Activated B cell treated with CpG ODN at 0.5 μM for 24 hours (primary cell): ENCODE measurements at regions of chr6 and their contacts with region 1.

Region 1: GRCh38 chr6:32244946-32245398 is 21.1 kb upstream of the NOTCH4 start:
- DNase-seq: peak; percentile 77
- ATAC-seq: peak; percentile 91
- H3K4me3 Mint-ChIP-seq: peak overlapping the region; percentile 81
- H3K27ac Mint-ChIP-seq: peak overlapping the region; percentile 50
- H3K4me1 Mint-ChIP-seq: peaks cover 16% of the 10 kb centered on the region
- H3K27me3 Mint-ChIP-seq: no peaks in the 10 kb centered on the region
- CTCF ChIP-seq: no peak

Region 2: GRCh38 chr6:32118782-32119628 is 126.0 kb before region 1 on chr6:
- CTCF ChIA-PET with region 1: interaction called, 5 read pairs
- POLR2A ChIA-PET with region 1: interaction called, 7 read pairs
- intact Hi-C with region 1: loop called (anchors 1 kb)
- DNase-seq: peak; percentile 57
- ATAC-seq: peak; percentile 94
- H3K4me3 Mint-ChIP-seq: no peak overlapping the region
- H3K27ac Mint-ChIP-seq: peak overlapping the region; percentile 56
- H3K4me1 Mint-ChIP-seq: peaks cover 8% of the 10 kb centered on the region
- H3K27me3 Mint-ChIP-seq: no peaks in the 10 kb centered on the region
- CTCF ChIP-seq: peak; percentile 57

Region 3: DNA sequence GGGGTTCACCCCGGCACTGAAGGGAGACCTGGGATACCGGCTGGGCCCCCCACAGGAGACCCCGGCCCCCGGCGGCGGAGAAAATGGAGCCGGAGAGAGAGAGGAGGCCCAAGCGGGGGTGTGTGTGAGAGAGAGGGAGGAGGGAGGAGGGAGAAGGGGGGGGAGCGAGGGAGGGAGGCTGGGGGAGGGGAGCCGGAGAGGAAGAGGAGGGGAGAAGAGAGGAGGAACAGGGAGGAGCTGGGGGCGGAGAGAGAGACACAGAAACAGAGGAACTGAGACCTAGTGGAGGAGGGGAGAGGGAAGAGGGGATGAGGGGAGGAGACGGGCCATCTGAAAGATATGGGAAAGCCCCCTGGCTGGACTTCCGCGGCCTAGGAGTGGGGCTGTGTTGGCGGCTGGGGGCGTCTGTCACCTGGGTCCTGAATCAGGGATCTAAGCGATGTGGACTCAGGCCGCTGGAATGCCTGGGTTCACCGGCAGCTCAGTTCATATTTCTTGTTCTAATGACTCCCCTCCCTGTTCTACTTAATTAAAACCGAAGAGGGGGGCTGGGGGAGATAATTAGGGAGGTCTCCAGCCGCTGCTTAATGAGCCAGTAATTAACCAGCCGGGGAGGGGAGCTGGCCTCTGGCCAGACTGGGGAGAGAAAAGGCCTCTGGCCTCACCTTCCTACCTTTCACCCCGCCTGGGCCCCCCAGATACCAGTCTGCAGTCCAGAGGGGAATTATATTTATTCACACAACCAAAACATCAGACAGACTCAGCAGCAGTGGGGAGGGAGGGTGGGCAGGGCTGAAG is 54.7 kb before region 1 on chr6 and contains the start of gene PBX2:
- CTCF ChIA-PET with region 1: interaction called, 6 read pairs
- POLR2A ChIA-PET with region 1: interaction called, 11 read pairs
- intact Hi-C with region 1: no loop called
- DNase-seq: peak; percentile 61
- ATAC-seq: peak; percentile 86
- H3K4me3 Mint-ChIP-seq: peak within 1 kb of the TSS; percentile 91
- H3K27ac Mint-ChIP-seq: peak within 1 kb of the TSS; percentile 96
- H3K4me1 Mint-ChIP-seq: peaks cover 85% of the 10 kb centered on the region
- H3K27me3 Mint-ChIP-seq: no peaks in the 10 kb centered on the region
- CTCF ChIP-seq: no peak
- total RNA-seq, gene PBX2: 134 and 153 TPM in 2 replicates

Region 4: GRCh38 chr6:32402812-32403211 is 157.8 kb after region 1 on chr6:
- CTCF ChIA-PET with region 1: interaction called, 10 read pairs
- POLR2A ChIA-PET with region 1: no interaction called
- intact Hi-C with region 1: no loop called
- DNase-seq: no peak
- ATAC-seq: no peak
- H3K4me3 Mint-ChIP-seq: no peak overlapping the region
- H3K27ac Mint-ChIP-seq: no peak overlapping the region
- H3K4me1 Mint-ChIP-seq: peaks cover 9% of the 10 kb centered on the region
- H3K27me3 Mint-ChIP-seq: peaks cover 2% of the 10 kb centered on the region
- CTCF ChIP-seq: no peak

Region 5: DNA sequence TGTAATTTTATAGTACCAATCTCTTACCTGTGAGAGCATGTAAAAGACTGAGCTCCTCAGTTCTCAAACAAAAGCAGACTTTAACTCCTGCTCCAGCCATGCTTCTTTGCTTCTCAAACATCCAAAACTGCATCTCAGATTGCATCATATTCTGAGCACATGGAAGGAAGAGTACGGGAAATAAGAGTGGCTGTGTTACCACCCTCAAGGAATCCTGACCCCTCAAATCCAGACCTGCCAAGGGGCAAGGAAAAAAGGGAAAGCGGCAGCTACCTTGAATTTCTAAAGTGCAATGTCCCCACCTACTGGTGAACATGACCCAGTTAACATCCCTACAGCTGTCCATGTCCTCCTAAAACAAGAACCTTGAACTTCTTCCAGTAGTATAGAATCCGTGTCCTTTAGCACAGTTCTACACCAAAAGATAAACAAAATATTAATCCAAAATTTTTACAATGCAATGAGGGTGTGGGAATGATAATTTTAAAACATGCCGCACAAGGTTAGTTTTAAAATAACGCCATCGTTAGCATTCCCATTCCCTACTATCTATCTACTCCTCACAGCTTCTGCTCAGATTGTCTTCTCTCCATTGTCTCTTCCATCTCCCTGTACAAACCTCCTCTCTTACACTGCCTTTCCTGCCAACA is 455.5 kb after region 1 on chr6:
- CTCF ChIA-PET with region 1: interaction called, 10 read pairs
- POLR2A ChIA-PET with region 1: no interaction called
- intact Hi-C with region 1: loop called (anchors 1 kb)
- DNase-seq: no peak
- ATAC-seq: peak; percentile 80
- H3K4me3 Mint-ChIP-seq: peak overlapping the region; percentile 86
- H3K27ac Mint-ChIP-seq: peak overlapping the region; percentile 91
- H3K4me1 Mint-ChIP-seq: peaks cover 32% of the 10 kb centered on the region
- H3K27me3 Mint-ChIP-seq: no peaks in the 10 kb centered on the region
- CTCF ChIP-seq: peak; percentile 32